PC-9 (cell line): ENCODE measurements at regions of chr4 and their contacts with region 1.

Region 1: DNA sequence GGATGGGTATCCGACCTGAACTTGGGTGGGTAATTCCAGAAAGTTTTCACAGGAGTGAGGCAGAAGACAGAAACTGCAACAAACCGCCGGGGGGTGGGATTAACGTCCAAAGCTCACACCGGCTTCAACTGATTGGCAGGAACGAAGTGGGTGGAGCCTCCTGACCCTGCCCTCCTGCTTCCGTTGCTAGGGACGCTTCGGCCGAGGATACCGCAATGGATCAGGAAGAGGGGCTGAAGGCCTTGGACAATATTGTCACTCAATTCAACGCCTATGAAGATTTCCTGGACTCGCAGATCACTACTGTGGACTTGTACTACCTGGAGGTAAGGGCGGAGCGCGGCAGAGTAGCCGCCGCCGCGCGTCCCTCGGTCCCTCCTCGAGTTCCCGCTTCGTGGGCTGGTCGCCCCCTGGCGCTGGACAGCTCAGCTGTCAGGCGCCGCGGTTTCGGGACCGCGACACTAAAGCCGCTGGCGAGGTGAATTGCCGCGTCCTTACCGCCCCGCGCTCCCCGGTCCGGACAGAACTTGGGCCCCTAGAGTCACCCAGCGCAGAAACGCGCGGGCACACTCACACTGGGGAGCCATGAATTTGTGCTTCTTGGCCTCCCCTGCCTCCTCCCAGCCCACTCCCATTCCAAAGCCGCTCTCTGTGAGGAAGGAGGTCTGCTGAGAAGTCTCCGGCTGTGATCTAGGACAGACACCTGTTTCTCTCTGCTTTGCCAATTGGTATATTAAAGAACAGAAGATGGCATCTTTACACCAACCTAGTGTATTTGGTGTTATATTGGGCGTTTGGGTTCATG is at the start of gene CFAP299:
- DNase-seq: peak; percentile 64 to 73
- H3K4me3 ChIP-seq: peak within 1 kb of the TSS; percentile 88
- H3K27ac ChIP-seq: no peak within 1 kb of the TSS
- H3K4me1 ChIP-seq: no peaks in the 10 kb centered on the region; the same call in 1 of the 2 replicates
- H3K27me3 ChIP-seq: no peaks in the 10 kb centered on the region
- CTCF ChIP-seq: peak; percentile 58
- total RNA-seq, gene CFAP299: not detected in 2 replicates

Region 2: DNA sequence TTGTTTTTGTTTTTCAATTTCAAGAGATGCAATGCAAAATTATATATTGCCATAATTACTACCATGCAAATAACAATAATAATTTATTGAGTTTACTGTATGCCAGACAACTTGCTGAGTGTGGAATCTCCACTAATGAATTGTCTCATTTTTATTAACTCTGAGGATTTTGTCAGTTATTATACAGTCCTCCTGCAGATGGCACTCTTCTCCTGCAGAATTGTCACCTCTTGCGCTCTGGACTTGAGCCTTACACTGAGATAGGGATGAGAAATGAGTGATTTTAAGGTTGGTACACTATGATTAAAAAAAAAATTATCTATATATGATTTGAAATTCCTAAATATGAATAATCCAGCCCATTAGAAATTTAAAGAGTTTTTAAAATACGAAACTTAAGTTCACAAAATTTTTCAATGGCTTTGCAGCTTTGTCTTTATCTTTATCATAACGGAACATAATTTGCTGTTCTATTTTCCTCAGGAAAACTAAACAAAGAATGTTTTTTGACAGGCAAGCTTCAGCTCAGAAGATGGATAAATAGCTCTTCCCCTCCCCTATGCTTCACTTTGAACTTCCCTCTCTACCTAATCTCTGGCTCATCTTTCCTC is 1383.8 kb before region 1 on chr4:
- CTCF ChIA-PET with region 1: no interaction called
- POLR2A ChIA-PET with region 1: no interaction called
- intact Hi-C with region 1: loop called (anchors 5 kb)
- DNase-seq: no peak
- H3K4me3 ChIP-seq: no peak overlapping the region
- H3K27ac ChIP-seq: no peak overlapping the region
- H3K4me1 ChIP-seq: no peaks in the 10 kb centered on the region
- H3K27me3 ChIP-seq: no peaks in the 10 kb centered on the region
- CTCF ChIP-seq: peak; percentile 77

Region 3: DNA sequence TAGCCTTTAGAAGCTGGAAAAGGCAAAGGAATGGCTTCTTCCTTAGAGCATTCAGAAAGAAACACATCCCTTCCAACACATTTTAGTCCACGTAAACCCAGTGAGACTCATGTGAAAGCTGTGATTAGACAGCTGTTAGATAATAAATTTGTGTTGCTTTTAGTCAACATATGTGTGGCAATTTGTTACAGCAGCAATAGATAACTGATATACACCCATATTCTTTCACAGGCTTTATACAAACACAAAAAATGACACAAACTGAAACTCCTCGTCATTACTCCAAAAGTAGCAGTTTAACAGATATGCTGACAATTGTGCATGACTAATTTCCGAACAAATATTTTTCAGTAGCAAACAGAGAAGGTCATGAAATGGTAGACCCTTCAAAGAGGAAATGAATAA is 328.0 kb before region 1 on chr4:
- CTCF ChIA-PET with region 1: no interaction called
- POLR2A ChIA-PET with region 1: no interaction called
- intact Hi-C with region 1: no loop called
- DNase-seq: no peak
- H3K4me3 ChIP-seq: no peak overlapping the region
- H3K27ac ChIP-seq: no peak overlapping the region
- H3K4me1 ChIP-seq: no peaks in the 10 kb centered on the region
- H3K27me3 ChIP-seq: no peaks in the 10 kb centered on the region
- CTCF ChIP-seq: no peak